Activated T-helper 1 cell treated with anti-CD3 and anti-CD28 coated beads, Interleukin-12 subunit alpha, Interleukin-12 subunit beta, Interleukin-2, Interleukin-4 antibody, amounts not matched to agents 30 ng/mL and 10 ng/mL and 1 ng/mL, durations not matched to agents 14 hours and 24 hours and 36 hours (primary cell): ENCODE measurements at regions of chr1 and their contacts with region 1.

Region 1: DNA sequence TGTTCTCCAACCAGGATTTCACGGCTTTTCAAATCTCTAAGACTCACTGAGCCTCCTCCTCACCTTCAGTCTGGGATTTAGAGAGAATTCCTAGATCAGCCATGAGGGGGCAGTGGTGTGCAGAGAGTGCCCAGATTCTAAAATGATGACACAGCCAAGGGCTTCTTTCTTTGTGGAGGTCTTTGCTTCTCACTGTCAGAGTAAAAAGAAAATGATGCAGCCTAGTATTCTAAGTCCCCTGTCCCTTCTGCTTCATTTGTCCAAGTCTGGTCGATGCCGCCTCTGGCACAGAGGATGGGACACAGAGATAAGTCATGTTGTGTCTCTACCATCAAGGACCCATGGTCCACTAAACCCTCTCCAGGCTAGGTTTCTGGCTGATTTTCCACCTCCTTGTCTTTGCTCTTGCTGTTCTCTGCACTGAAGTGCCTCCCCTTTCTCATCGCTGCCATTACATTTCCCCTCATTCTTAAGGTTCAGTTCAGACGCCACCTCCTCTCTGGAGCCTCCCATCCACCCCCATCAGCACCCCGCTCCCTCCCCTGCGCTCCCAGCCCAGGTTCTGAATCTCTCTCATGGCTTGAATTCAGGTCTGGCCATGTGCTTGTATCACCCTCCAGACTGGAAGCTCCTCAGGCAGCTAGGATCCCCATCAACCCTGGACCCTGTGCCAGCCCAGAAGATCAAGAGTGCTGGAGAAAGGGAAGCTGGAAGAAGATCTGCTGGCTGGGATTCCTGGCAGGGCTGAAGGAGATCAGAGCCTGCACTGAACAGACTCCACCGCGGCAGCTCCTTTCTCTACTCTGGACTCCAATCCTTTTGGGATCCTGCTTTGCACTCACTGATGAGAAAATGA is 12.0 kb upstream of the TINAGL1 start:
- DNase-seq: peak; percentile 25
- H3K4me3 Mint-ChIP-seq: no peak overlapping the region
- H3K27ac Mint-ChIP-seq: no peak overlapping the region
- H3K4me1 Mint-ChIP-seq: no peaks in the 10 kb centered on the region
- H3K27me3 Mint-ChIP-seq: peaks cover 15% of the 10 kb centered on the region

Region 2: DNA sequence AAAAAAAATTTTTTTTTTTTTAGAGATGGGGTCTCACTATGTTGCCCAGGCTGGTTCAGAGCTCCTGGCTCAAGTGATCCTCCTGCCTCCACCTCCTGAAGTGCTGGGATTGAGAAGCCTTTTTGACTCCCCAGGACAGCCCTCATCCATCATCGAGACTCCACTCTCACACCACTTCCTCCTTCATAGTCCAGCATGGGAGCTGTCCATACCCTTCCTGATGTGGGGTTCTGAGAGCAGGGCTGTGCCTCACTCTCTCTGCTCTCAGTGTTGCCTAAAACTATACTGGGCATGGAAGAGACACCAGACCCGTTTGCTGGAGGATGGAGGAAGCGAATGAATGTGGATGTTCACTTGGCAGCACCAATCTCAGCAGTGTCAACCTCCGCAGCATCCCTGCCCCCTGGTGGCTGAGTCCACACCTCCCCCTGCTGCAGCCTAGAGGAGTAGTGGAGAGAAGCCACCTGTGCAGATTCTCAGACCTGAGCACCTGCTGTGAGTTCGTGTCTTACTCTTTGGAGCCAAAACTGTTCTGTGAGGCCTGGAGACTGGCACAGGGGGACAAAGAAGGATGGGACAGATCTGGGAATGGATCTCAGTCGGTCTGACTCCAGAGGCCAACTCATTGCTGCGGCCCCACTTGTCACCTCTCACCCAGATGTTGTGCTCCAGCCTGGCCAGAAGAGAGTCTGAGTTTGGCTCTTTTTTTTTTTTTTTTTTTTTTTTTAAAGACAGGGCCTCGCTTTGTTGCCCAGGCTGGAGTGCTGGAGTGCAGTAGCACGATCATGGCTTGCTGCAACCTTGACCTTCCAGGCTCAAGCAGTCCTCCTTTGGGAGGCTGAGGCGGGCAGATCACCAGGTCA is 29.6 kb after region 1 on chr1:
- intact Hi-C with region 1: loop called (anchors 2 kb)
- DNase-seq: no peak
- H3K4me3 Mint-ChIP-seq: no peak overlapping the region
- H3K27ac Mint-ChIP-seq: no peak overlapping the region
- H3K4me1 Mint-ChIP-seq: no peaks in the 10 kb centered on the region
- H3K27me3 Mint-ChIP-seq: peaks cover 21% of the 10 kb centered on the region

Region 3: GRCh38 chr1:31617917-31618660 is 53.7 kb after region 1 on chr1:
- intact Hi-C with region 1: loop called (anchors 1 kb)
- DNase-seq: no peak
- H3K4me3 Mint-ChIP-seq: no peak overlapping the region
- H3K27ac Mint-ChIP-seq: no peak overlapping the region
- H3K4me1 Mint-ChIP-seq: no peaks in the 10 kb centered on the region
- H3K27me3 Mint-ChIP-seq: peaks cover 35% of the 10 kb centered on the region

Region 4: GRCh38 chr1:31639543-31639942 is 75.2 kb after region 1 on chr1:
- intact Hi-C with region 1: loop called (anchors 5 kb)
- DNase-seq: no peak
- H3K4me3 Mint-ChIP-seq: no peak overlapping the region
- H3K27ac Mint-ChIP-seq: no peak overlapping the region
- H3K4me1 Mint-ChIP-seq: peaks cover 9% of the 10 kb centered on the region
- H3K27me3 Mint-ChIP-seq: no peaks in the 10 kb centered on the region

Region 5: GRCh38 chr1:31705080-31705866 is 140.9 kb after region 1 on chr1:
- intact Hi-C with region 1: loop called (anchors 10 kb)
- DNase-seq: peak; percentile 76
- H3K4me3 Mint-ChIP-seq: peak overlapping the region; percentile 66
- H3K27ac Mint-ChIP-seq: peak overlapping the region; percentile 64
- H3K4me1 Mint-ChIP-seq: peaks cover 54% of the 10 kb centered on the region
- H3K27me3 Mint-ChIP-seq: peaks cover 37% of the 10 kb centered on the region